ENCODE measurements at regions of chr4 and their contacts with region 1.

Region 1: DNA sequence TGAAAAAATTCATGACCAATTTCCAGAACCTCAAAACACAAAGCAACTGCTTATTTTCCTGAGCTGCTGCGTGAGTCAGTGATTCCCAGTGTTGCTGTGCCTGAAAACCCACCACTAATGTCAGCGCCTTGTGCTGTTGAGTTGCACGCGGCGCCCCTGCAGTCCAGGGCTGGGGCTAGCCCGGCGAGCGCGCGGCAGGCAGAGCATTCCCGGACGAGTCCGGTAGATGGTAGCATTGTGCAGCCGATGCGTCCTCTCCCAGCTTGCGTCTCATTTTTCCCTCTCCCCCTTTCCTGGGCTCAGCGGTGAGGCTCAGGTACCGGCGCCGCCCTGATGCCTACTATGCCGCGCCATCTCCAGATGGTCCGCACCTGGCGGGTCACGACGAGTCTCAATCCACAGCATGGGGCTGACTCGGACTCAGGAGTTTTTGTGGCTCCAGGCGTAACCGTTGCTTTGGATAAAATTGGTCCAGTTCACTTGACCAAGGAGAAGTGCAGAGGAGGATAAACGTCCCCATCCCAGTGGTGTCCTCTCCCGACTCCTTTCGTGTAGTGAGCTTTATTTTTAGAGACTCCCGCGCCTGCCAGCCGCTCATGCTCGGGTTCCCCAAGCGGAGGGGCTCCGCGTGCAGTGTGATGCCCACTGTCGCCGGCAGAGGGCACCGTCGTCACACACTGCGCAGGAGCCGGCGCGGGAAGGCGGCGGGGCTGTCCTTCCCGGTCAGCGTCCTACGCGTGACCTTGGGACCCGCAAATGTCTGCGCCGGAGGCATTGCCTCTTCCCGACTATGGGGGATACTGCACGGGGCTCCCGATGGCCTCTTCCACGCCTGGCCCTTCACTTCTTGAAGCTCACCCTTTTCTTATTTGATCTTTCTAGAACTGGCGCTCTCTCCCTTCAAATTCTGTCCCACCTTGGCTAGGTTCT is 53.6 kb upstream of the IGFBP7 start:
- DNase-seq: peak; percentile 59 to 90 (median 80)
- H3K4me3 ChIP-seq: peak overlapping the region; percentile 49 to 94 (median 75)
- H3K27ac ChIP-seq: peak overlapping the region in 58 of 59 donors; percentile 26 to 95 (median 85)
- H3K27me3 ChIP-seq: no peaks in the 10 kb centered on the region
- CTCF ChIP-seq: peak; percentile 56 to 98 (median 86)

Region 2: DNA sequence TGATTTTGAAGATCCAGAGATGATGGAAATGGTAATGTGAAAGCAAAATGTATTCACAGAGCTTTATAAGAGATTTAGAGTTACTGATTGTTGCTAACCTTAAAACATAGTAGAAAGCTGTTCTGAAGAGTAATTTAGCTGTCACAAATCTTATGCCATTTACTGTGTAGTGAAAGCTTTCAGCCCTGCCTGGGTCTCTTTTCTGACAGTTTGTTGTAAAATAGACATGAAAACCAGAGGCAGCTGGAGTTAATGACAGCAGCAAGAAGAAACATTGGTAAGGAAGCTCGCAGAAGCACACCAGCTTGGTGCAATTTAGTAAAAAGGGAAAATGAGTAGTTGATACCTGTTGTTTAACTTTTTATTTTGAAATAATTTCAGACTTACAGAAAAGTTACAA is 164.0 kb before region 1 on chr4:
- intact Hi-C with region 1: no loop called
- DNase-seq: no peak
- H3K4me3 ChIP-seq: no peak overlapping the region
- H3K27ac ChIP-seq: no peak overlapping the region
- H3K27me3 ChIP-seq: no peaks in the 10 kb centered on the region
- CTCF ChIP-seq: no peak

Region 3: GRCh38 chr4:57137261-57137660 is 26.5 kb before region 1 on chr4:
- intact Hi-C with region 1: no loop called
- DNase-seq: no peak
- H3K4me3 ChIP-seq: no peak overlapping the region
- H3K27ac ChIP-seq: no peak overlapping the region
- H3K27me3 ChIP-seq: no peaks in the 10 kb centered on the region
- CTCF ChIP-seq: no peak

Region 4: DNA sequence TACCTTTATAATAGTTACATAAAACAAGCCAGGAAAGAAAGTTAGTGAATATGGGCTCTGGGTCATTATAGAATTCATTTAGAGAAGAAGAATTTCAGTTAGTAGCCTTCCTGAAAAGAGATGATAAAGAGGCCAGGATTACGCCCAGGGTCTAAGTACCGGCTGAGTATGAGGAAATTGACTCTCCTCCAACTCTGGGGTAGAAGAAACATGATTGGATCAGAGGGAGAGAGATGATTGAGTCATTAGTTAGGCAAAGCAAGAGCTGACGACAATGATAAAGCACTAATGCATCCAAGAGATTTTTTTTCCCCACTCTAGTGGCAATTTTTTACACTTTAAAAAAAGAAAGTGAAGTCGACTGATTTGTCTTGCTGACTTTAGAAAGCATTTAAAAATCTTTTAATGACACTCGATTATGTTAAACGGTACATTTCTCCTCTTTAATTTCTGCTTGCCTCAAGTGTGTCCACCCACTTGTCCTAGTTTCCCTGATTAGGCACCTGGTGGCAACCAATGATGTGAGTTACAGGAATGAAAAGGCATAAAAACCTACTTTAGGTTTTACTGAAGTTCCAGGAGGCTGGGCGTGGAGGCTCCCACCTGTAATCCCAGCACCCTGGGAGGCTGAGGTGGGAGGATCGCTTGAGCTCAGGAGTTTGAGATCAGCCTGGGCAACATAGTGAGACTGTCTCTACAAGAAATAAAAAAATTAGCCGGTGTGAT is 16.3 kb before region 1 on chr4:
- intact Hi-C with region 1: no loop called
- DNase-seq: no peak
- H3K4me3 ChIP-seq: no peak overlapping the region
- H3K27ac ChIP-seq: no peak overlapping the region
- H3K27me3 ChIP-seq: no peaks in the 10 kb centered on the region
- CTCF ChIP-seq: no peak

Region 5: GRCh38 chr4:57182132-57182874 is 18.5 kb after region 1 on chr4:
- intact Hi-C with region 1: loop called in 1 of 2 experiments (anchors 2 kb)
- DNase-seq: peak; percentile 34 to 99 (median 91)
- H3K4me3 ChIP-seq: no peak overlapping the region
- H3K27ac ChIP-seq: peak overlapping the region in 52 of 59 donors; percentile 15 to 90 (median 75)
- H3K27me3 ChIP-seq: no peaks in the 10 kb centered on the region
- CTCF ChIP-seq: peak in 3 of 56 donors; percentile 15 to 29 (median 27)

Region 6: DNA sequence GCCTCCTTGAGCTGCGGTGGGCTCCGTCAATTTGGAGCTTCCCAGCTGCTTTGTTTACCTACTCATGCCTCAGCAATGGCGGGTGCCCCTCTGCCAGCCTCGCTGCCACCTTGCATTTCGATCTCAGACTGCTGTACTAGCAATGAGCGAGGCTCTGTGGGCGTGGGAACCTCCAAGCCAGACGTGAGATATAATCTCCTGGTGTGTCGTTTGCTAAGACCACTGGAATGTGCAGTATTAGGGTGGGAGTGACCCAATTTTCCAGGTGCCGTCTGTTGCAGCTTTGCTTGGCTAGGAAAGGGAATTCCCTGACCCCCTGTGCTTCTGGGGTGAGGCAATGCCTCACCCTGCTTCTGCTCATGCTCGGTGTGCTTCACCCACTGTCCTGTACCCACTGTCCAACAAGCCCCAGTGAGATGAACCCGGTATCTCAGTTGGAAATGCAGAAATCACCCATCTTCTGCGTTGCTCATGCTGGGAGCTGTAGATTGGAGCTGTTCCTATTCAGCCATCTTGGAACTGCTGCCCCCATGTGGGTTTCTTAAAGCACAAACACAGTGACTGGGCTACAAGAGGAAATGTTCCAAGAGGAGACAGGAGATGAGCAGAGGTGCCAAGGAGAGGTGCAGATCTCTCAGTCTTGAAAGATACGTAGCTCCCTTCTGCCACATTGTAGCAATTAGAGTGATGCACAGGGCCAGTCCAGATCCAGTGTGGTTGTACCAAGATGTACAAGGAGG is 139.4 kb after region 1 on chr4:
- intact Hi-C with region 1: loop called (anchors 1 to 5 kb)
- DNase-seq: peak in 2 of 10 donors; percentile 23 to 41
- H3K4me3 ChIP-seq: no peak overlapping the region
- H3K27ac ChIP-seq: no peak overlapping the region
- H3K27me3 ChIP-seq: no peaks in the 10 kb centered on the region
- CTCF ChIP-seq: peak in 38 of 56 donors; percentile 2 to 54 (median 28)

Region 7: DNA sequence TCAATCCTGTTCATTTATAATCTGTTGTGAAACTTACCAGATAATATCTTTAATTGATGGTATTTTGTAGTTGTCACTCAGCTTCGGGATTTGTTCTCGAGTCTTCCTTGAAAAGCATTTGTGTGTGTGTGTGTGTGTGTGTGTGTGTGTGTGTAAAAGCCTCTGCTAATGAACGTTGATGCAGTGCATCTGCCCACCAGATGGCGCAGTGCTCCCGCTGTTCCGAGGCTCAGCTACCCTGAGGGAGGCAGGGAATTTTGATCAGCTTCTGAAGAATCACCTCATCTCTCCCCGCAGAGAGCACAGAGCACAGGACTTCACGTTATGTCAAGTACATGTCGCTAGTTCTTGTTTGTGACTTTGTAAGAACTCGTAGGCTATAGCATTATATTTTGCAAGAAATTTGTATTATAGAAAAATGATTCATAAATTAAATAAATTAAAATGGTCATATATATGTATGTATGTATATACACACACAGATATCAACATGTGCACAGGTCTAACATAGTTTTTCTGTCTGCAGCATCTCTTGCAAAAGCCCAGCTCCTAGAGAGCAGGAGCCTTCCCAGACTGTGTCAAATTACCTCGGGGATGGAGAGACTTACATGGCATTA is 263.1 kb after region 1 on chr4:
- intact Hi-C with region 1: loop called (anchors 5 kb)
- DNase-seq: peak; percentile 13 to 84 (median 75)
- H3K4me3 ChIP-seq: no peak overlapping the region
- H3K27ac ChIP-seq: no peak overlapping the region
- H3K27me3 ChIP-seq: peaks cover 0 to 5% (median 0%) of the 10 kb centered on the region in 45 donors
- CTCF ChIP-seq: peak; percentile 33 to 84 (median 66)

Region 8: GRCh38 chr4:57550198-57550597 is 386.4 kb after region 1 on chr4:
- intact Hi-C with region 1: no loop called
- DNase-seq: peak in 1 of 10 donors; percentile 25
- H3K4me3 ChIP-seq: no peak overlapping the region
- H3K27ac ChIP-seq: no peak overlapping the region
- H3K27me3 ChIP-seq: no peaks in the 10 kb centered on the region
- CTCF ChIP-seq: no peak